B cell (primary cell): ENCODE measurements at regions of chr18 and their contacts with region 1.

Region 1: DNA sequence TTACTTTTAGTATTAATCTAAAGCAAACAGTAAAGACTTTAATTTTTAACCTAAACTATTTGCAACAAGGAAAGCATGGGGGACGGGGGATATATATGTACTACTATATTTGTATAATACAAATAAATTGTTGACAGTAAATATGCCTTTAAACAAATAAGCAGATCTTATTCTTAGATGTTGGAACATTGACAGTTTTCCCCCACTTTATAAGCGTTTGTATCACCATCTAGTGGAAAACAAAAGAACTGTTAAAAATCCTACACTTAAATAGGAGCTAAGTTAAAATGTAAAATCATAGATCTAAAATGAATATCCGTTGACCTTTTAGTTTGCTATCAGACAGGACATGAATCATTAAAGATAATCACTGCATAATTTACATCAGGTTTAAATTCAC is 50.0 kb downstream of the RBBP8 start:
- DNase-seq: peak; percentile 47
- ATAC-seq: no peak
- H3K4me3 ChIP-seq: no peak overlapping the region
- H3K4me3 Mint-ChIP-seq: no peak overlapping the region
- H3K27ac ChIP-seq: no peak overlapping the region
- H3K27ac Mint-ChIP-seq: no peak overlapping the region
- H3K4me1 ChIP-seq: peaks cover 18 to 22% of the 10 kb centered on the region in 2 donors
- H3K4me1 Mint-ChIP-seq: peaks cover 24% of the 10 kb centered on the region
- H3K27me3 ChIP-seq: no peaks in the 10 kb centered on the region
- H3K27me3 Mint-ChIP-seq: no peaks in the 10 kb centered on the region
- CTCF ChIP-seq: peak; percentile 68

Region 2: GRCh38 chr18:21194871-21195771 is 1788.1 kb before region 1 on chr18:
- CTCF ChIA-PET with region 1: no interaction called
- POLR2A ChIA-PET with region 1: no interaction called
- intact Hi-C with region 1: loop called (anchors 5 kb)
- DNase-seq: peak; percentile 56
- ATAC-seq: no peak
- H3K4me3 ChIP-seq: no peak overlapping the region
- H3K4me3 Mint-ChIP-seq: no peak overlapping the region
- H3K27ac ChIP-seq: no peak overlapping the region
- H3K27ac Mint-ChIP-seq: no peak overlapping the region
- H3K4me1 ChIP-seq: no peaks in the 10 kb centered on the region
- H3K4me1 Mint-ChIP-seq: no peaks in the 10 kb centered on the region
- H3K27me3 ChIP-seq: peaks cover 0 to 3% (median 0%) of the 10 kb centered on the region in 4 experiments
- H3K27me3 Mint-ChIP-seq: peaks cover 13% of the 10 kb centered on the region
- CTCF ChIP-seq: peak; percentile 86

Region 3: GRCh38 chr18:22800551-22800951 is 182.6 kb before region 1 on chr18:
- CTCF ChIA-PET with region 1: interaction called, 35 read pairs
- POLR2A ChIA-PET with region 1: no interaction called
- intact Hi-C with region 1: loop called (anchors 1 kb)
- DNase-seq: no peak
- ATAC-seq: no peak
- H3K4me3 ChIP-seq: no peak overlapping the region
- H3K4me3 Mint-ChIP-seq: no peak overlapping the region
- H3K27ac ChIP-seq: no peak overlapping the region
- H3K27ac Mint-ChIP-seq: no peak overlapping the region
- H3K4me1 ChIP-seq: no peaks in the 10 kb centered on the region
- H3K4me1 Mint-ChIP-seq: no peaks in the 10 kb centered on the region
- H3K27me3 ChIP-seq: peaks cover 0 to 2% (median 0%) of the 10 kb centered on the region in 4 experiments
- H3K27me3 Mint-ChIP-seq: no peaks in the 10 kb centered on the region
- CTCF ChIP-seq: no peak

Region 4: DNA sequence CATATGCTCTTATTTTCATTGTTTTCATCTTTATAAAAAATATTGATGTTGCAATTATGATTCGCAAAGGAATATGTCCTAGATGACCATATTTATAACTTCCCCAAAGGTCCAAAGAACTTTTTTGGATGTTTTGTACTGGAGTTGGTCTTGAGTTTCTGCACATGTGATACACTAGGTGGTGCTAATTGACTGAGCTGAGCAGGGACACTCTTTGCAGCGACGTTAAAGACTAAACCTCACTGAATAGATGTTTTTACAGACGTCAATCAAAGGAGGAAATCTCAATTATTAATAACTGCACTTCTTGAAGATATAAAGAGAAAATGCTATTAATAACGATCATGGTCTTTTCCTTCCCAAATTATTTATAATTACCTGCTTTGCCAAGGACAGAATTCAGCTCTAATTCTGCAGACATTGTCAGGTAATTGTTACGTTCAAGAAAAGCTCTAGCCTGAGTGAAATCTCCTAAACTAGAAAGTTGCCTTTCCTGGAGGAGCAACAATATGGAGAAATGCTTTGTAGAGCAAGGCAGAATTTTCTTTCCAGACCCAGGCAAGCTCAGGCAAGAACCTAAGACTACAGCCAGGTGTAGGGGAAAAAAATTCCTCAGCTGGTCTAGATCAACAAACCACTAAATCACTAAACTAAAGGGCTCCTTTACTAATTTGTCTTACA is 169.4 kb before region 1 on chr18:
- CTCF ChIA-PET with region 1: interaction called, 34 read pairs
- POLR2A ChIA-PET with region 1: no interaction called
- intact Hi-C with region 1: loop called (anchors 1 kb)
- DNase-seq: peak; percentile 44
- ATAC-seq: no peak
- H3K4me3 ChIP-seq: no peak overlapping the region
- H3K4me3 Mint-ChIP-seq: no peak overlapping the region
- H3K27ac ChIP-seq: no peak overlapping the region
- H3K27ac Mint-ChIP-seq: no peak overlapping the region
- H3K4me1 ChIP-seq: no peaks in the 10 kb centered on the region
- H3K4me1 Mint-ChIP-seq: no peaks in the 10 kb centered on the region
- H3K27me3 ChIP-seq: no peaks in the 10 kb centered on the region
- H3K27me3 Mint-ChIP-seq: peaks cover 16% of the 10 kb centered on the region
- CTCF ChIP-seq: peak; percentile 61

Region 5: GRCh38 chr18:22846088-22846683 is 137.0 kb before region 1 on chr18:
- CTCF ChIA-PET with region 1: interaction called, 5 read pairs
- POLR2A ChIA-PET with region 1: no interaction called
- intact Hi-C with region 1: loop called (anchors 1 kb)
- DNase-seq: peak; percentile 6
- ATAC-seq: no peak
- H3K4me3 ChIP-seq: no peak overlapping the region
- H3K4me3 Mint-ChIP-seq: no peak overlapping the region
- H3K27ac ChIP-seq: no peak overlapping the region
- H3K27ac Mint-ChIP-seq: no peak overlapping the region
- H3K4me1 ChIP-seq: no peaks in the 10 kb centered on the region
- H3K4me1 Mint-ChIP-seq: peaks cover 4% of the 10 kb centered on the region
- H3K27me3 ChIP-seq: no peaks in the 10 kb centered on the region
- H3K27me3 Mint-ChIP-seq: no peaks in the 10 kb centered on the region
- CTCF ChIP-seq: peak; percentile 23

Region 6: GRCh38 chr18:22924589-22924988 is 58.6 kb before region 1 on chr18:
- CTCF ChIA-PET with region 1: interaction called, 61 read pairs
- POLR2A ChIA-PET with region 1: no interaction called
- intact Hi-C with region 1: no loop called
- DNase-seq: no peak
- ATAC-seq: no peak
- H3K4me3 ChIP-seq: no peak overlapping the region
- H3K4me3 Mint-ChIP-seq: no peak overlapping the region
- H3K27ac ChIP-seq: no peak overlapping the region
- H3K27ac Mint-ChIP-seq: no peak overlapping the region
- H3K4me1 ChIP-seq: no peaks in the 10 kb centered on the region
- H3K4me1 Mint-ChIP-seq: no peaks in the 10 kb centered on the region
- H3K27me3 ChIP-seq: no peaks in the 10 kb centered on the region
- H3K27me3 Mint-ChIP-seq: no peaks in the 10 kb centered on the region
- CTCF ChIP-seq: no peak